ENCODE measurements at regions of chr2 and their contacts with region 1.

Region 1: DNA sequence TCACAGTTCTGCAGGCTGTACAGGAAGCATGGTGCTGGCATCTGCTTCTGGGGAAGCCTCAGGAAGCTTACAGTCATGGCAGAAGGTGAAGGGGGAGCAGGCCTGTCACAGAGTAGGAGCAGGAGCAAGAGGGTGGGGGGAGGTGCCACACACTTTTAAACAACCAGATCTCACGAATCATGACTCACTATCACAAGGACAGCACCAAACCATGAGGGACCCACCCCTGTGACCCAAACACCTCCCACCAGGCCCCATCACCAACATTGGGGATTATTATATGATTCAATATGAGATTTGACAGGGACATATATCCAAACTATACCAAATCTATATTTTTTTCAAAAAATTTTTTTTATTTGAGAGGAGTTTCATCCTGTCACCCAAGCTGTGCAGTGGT is 51.0 kb upstream of the GLS start:
- DNase-seq: no peak

Region 2: DNA sequence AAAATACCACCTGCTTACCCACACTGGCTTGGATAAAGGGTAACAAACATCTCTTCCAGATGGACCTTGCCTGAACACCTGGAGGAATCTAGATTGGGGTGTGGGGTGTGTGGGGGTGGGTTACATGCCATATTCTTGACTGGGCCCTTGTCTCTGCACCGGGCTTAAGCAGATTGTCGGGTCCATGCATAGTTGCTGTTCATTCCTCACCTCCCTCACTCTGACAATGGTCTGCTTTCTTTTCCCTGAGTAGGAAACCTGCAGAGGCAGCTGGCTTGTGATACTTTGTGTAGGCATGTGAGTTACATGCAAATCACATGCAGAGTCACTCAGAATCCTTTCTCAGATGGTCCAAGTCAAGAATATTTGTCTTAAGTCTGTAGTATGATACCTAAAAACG is 61.8 kb before region 1 on chr2:
- intact Hi-C with region 1: loop called in 1 of 2 experiments (anchors 2 kb)
- DNase-seq: no peak

Region 3: DNA sequence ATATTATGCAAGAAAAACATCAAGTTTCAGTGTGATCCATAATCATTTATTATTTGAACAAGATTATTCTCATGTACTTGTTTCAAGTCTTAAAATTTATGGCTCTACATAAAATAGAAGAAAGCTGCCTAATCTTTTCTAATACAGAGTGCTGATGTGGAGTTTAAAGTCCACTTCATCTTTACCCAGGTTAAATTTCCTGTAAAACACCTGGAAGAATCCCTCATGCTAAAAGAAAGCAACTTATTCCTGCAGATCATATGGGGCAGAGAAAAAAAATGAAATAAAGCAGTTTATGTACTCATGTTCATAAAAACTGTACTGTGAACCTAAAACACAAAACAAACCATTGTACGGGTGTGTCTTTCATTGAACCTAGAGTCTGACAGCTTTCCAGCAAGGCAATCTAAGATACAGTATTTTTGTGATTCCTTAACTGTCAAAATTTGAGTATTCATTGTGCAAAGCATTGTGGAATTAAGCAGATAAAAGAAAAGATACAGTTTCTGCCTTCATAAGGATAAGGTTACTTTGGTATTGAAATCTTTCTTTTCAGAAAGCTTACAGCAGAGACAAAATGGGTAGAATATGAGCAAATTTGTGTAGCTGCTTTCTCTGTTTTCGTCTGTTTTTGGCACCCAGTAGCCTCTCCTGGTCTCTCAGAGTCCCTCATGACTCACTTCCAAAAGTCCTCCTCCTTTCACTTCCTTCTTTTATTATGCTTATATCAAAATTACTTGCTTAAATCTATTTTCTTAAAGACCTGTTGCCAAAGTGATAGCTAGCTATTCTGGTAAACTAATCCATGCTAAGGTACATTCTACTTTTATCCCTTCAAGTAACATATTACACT is 24.1 kb after region 1 on chr2:
- intact Hi-C with region 1: no loop called
- DNase-seq: no peak

Measured in posterior vena cava (tissue), 2 donors.